ENCODE measurements at regions of chr15 and their contacts with region 1.

Region 1: DNA sequence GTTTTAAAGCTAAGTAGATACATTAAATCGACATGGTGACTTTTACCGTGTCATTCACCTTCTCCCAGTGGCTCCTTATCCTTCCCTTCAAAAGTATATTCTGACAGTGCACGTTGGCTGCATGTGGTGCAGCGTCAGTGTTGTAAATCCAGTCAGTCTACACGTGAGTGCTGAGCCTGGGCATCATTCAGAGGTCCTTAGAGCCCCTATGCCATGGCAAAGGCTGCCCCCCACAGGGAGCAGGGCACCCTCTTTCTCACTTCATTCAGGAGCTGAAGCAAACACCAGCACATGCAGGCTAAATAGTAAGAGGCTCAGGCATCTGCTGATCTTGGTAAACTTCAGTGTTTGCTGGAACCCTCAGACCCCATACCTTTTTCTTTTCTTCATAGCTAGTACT is 43.3 kb downstream of the RASGRP1 start:
- DNase-seq: no peak
- ATAC-seq: no peak
- H3K4me3 ChIP-seq: no peak overlapping the region
- H3K4me3 Mint-ChIP-seq: no peak overlapping the region
- H3K27ac ChIP-seq: peak overlapping the region; percentile 19
- H3K27ac Mint-ChIP-seq: peak overlapping the region; percentile 34 to 91 (median 82)
- H3K4me1 ChIP-seq: peaks cover 0 to 7% of the 10 kb centered on the region in 2 donors
- H3K4me1 Mint-ChIP-seq: peaks cover 22 to 63% (median 57%) of the 10 kb centered on the region in 7 donors
- H3K27me3 ChIP-seq: no peaks in the 10 kb centered on the region
- H3K27me3 Mint-ChIP-seq: no peaks in the 10 kb centered on the region

Region 2: DNA sequence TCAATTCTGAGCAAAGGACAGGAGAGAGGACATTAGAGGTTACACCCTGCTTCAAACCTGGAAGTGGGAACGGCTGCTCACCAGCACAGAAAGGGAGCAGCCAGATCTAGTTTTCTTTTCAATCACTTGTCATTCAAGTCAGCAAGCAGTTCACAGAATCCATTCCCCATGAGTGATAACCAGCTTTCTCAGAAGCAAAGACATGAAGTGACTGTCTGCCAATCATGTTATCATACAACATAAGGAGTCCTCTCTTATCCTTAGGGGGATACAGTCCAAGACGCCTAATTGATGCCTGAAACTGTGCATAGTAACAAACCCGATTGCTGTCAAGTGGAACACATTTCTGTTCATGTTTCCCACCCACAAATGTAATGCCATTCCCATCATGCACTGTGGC is 12.7 kb before region 1 on chr15:
- CTCF ChIA-PET with region 1: interaction called, 6 read pairs
- POLR2A ChIA-PET with region 1: interaction called, 5 read pairs
- intact Hi-C with region 1: loop called in 1 of 2 experiments (anchors 2 kb)
- DNase-seq: no peak
- ATAC-seq: no peak
- H3K4me3 ChIP-seq: no peak overlapping the region
- H3K4me3 Mint-ChIP-seq: peak overlapping the region in 1 of 10 donors; percentile 44
- H3K27ac ChIP-seq: no peak overlapping the region
- H3K27ac Mint-ChIP-seq: peak overlapping the region; percentile 55 to 84 (median 72)
- H3K4me1 ChIP-seq: no peaks in the 10 kb centered on the region
- H3K4me1 Mint-ChIP-seq: peaks cover 0 to 50% (median 0%) of the 10 kb centered on the region in 7 donors
- H3K27me3 ChIP-seq: no peaks in the 10 kb centered on the region
- H3K27me3 Mint-ChIP-seq: no peaks in the 10 kb centered on the region

Region 3: GRCh38 chr15:38538372-38539343 is 17.3 kb after region 1 on chr15:
- CTCF ChIA-PET with region 1: interaction called, 3 read pairs
- POLR2A ChIA-PET with region 1: interaction called, 3 read pairs
- intact Hi-C with region 1: loop called in 1 of 2 experiments (anchors 2 kb)
- DNase-seq: peak in 6 of 9 donors; percentile 25 to 50 (median 33)
- ATAC-seq: peak; percentile 62
- H3K4me3 ChIP-seq: peak overlapping the region; percentile 22
- H3K4me3 Mint-ChIP-seq: peak overlapping the region; percentile 55 to 86 (median 77)
- H3K27ac ChIP-seq: peak overlapping the region; percentile 63
- H3K27ac Mint-ChIP-seq: peak overlapping the region; percentile 79 to 99 (median 94)
- H3K4me1 ChIP-seq: peaks cover 81 to 83% of the 10 kb centered on the region in 2 donors
- H3K4me1 Mint-ChIP-seq: peaks cover 82 to 98% (median 97%) of the 10 kb centered on the region in 7 donors
- H3K27me3 ChIP-seq: no peaks in the 10 kb centered on the region
- H3K27me3 Mint-ChIP-seq: no peaks in the 10 kb centered on the region